ENCODE measurements at regions of chr11 and their contacts with region 1.

Region 1: DNA sequence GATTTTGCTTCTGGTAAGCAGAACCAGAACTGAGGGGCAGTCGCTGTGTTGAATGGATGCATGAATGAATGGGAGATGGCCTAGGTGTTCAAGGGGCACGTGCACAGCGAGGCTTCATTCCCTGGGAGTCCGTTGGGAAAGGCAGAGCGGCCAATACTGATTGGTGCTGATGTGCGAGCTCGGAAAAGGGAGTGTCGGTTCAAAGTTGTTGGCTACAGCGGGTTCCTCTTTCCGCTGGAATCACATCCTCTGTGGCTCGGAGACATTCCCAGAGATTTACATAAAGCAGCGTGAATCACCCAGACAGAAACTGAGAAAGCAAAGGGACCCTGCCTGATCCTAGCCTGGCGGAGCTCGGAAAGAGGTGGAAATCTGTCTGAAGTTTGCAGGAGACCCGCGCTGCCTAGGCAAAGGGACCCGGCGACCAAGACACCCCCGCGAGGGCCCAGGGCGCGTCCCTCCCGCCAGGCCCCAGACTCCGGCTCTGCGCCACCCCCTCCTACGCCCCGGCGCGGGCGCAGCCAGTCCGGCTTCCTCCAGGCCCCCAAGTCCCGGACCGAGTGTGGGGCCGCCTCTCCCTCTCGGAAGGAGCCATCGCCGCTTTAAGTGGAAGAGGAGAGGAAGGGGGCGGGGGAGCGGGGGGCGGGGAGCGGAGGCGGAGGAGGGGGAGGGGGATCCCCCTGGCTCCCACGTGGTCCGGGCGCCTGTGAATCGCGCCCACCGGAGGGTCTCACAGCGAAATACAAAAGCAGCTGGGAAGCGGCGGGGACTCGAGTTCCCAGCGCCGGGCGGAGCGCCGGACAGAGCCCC is at the start of gene FJX1:
- DNase-seq: peak; percentile 83
- H3K4me3 ChIP-seq: peak within 1 kb of the TSS; percentile 54 to 75 (median 62)
- H3K27ac ChIP-seq: peak within 1 kb of the TSS; percentile 92
- H3K4me1 ChIP-seq: peaks cover 32% of the 10 kb centered on the region
- H3K27me3 ChIP-seq: peaks cover 3 to 18% of the 10 kb centered on the region in 2 experiments
- CTCF ChIP-seq: no peak
- POLR2A ChIP-seq: peak; percentile 32
- total RNA-seq, gene FJX1: 23.7 and 26.6 TPM in 2 replicates

Region 2: DNA sequence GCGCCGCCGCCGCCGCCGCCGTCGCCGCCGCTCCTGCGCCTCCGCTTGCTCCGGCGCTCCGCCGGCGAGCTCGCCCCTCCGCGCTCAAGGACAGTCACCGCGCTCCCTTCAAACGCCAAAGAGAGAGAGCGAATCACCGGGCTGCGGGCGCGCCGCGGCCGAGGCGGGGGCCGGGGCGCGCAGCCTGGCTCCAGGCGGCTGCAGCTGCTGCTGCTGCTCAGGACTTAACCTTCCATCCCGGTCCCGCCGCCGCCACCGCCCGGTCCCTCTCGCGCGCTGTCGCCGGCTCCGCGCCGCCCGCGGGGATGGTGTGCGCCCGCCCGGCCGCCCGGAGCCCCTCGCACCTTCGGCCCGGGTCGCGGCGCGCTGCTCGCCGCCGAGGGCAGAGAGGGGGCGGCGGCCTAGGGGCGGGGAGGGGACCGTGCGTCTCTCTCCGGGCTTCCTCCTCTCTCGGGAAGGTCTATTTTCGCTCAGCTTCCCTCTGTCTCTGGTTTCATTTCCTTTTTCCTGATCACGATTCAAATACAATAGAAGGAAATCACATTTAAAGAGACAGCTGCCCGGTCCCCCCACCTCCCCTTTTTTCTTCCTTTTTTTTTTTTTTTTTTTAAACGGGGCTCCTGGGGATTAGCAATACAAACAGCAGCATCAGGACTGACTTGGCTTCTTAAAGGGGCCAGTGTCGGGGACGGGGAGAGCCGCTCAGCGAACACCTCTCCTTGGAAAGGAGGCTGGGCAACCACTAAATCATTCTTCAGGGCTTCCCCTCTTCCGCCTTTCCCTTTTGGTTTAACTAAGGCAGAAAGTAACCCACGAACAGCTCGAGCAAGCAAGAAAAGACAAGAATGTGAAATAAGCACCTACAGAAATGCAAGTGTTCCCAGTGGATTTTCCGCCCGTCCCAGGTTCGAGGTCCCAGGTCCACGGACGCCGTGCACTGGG is 1748.1 kb before region 1 on chr11:
- CTCF ChIA-PET with region 1: no interaction called
- POLR2A ChIA-PET with region 1: no interaction called
- dilution Hi-C with region 1: no loop called
- intact Hi-C with region 1: loop called (anchors 5 kb)
- DNase-seq: peak; percentile 92
- H3K4me3 ChIP-seq: peak overlapping the region; percentile 56 to 87 (median 76)
- H3K27ac ChIP-seq: peak overlapping the region; percentile 62
- H3K4me1 ChIP-seq: peaks cover 23% of the 10 kb centered on the region
- H3K27me3 ChIP-seq: peaks cover 0 to 2% of the 10 kb centered on the region in 2 experiments
- CTCF ChIP-seq: no peak
- POLR2A ChIP-seq: no peak

Region 3: GRCh38 chr11:35387111-35387982 is 230.5 kb before region 1 on chr11:
- CTCF ChIA-PET with region 1: no interaction called
- POLR2A ChIA-PET with region 1: no interaction called
- dilution Hi-C with region 1: no loop called
- intact Hi-C with region 1: no loop called
- DNase-seq: no peak
- H3K4me3 ChIP-seq: no peak overlapping the region
- H3K27ac ChIP-seq: no peak overlapping the region
- H3K4me1 ChIP-seq: no peaks in the 10 kb centered on the region
- H3K27me3 ChIP-seq: peaks cover 2 to 11% of the 10 kb centered on the region in 2 experiments
- CTCF ChIP-seq: no peak
- POLR2A ChIP-seq: no peak

Region 4: GRCh38 chr11:35714882-35715627 is 97.2 kb after region 1 on chr11:
- CTCF ChIA-PET with region 1: interaction called, 4 read pairs
- POLR2A ChIA-PET with region 1: no interaction called
- dilution Hi-C with region 1: no loop called
- intact Hi-C with region 1: loop called (anchors 5 kb)
- DNase-seq: no peak
- H3K4me3 ChIP-seq: no peak overlapping the region
- H3K27ac ChIP-seq: no peak overlapping the region
- H3K4me1 ChIP-seq: no peaks in the 10 kb centered on the region
- H3K27me3 ChIP-seq: no peaks in the 10 kb centered on the region
- CTCF ChIP-seq: no peak
- POLR2A ChIP-seq: no peak

Region 5: DNA sequence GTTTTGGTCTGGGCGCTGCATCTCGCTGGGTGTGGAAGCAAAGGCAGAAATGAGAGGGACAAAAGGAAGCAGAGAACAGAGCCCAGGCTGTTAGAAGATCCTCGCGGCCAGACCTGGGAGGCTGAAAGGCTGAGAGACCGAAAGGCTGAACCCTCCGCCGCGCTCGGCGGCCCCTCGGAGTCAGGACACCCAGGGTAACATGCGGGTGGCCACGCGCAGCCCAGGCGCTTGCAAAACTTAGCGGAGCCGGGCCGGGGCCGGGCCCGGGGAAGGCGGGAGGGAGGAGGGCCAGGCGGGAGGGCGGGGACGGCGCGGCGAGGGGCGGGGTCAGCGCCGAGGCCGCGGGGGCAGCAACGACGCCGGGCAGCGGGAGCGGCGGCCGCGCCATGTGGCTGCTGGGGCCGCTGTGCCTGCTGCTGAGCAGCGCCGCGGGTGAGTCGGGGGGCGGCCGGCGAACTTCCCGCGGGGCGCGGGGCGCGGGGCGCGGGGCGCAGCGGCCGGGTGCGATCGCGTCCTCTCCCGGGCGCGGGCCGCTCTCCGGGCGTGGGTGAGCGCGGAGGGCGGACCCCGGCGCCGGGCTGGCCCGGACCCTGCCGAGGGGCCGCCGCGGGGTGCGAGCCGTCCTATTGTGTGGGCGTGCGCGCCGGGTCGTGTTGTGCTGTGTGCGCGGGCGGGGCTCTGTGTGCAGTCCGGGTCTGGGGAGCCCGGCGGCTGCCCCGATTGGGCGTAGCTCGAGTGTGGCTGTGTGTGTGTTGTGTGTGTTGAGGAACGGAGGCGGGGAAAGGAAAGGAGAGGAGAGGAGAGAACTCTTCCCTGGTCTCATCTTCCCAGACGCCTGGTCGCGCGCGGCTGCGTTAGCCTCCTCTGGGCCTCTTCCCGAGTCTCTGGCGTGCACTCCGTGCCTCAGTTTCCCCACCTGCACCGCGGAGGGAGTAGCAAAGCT is 326.1 kb after region 1 on chr11 and contains the start of gene LDLRAD3:
- CTCF ChIA-PET with region 1: no interaction called
- POLR2A ChIA-PET with region 1: no interaction called
- dilution Hi-C with region 1: no loop called
- intact Hi-C with region 1: loop called (anchors 2 kb)
- DNase-seq: peak; percentile 72
- H3K4me3 ChIP-seq: peak within 1 kb of the TSS; percentile 62 to 82 (median 77)
- H3K27ac ChIP-seq: peak within 1 kb of the TSS; percentile 45
- H3K4me1 ChIP-seq: peaks cover 18% of the 10 kb centered on the region
- H3K27me3 ChIP-seq: no peaks in the 10 kb centered on the region
- CTCF ChIP-seq: no peak
- POLR2A ChIP-seq: peak; percentile 54
- total RNA-seq, gene LDLRAD3: 19.9 and 25.1 TPM in 2 replicates

Region 6: GRCh38 chr11:36056160-36056751 is 438.4 kb after region 1 on chr11:
- CTCF ChIA-PET with region 1: interaction called, 7 read pairs
- POLR2A ChIA-PET with region 1: no interaction called
- dilution Hi-C with region 1: no loop called
- intact Hi-C with region 1: loop called (anchors 1 kb)
- DNase-seq: peak; percentile 58
- H3K4me3 ChIP-seq: no peak overlapping the region
- H3K27ac ChIP-seq: no peak overlapping the region
- H3K4me1 ChIP-seq: peaks cover 18% of the 10 kb centered on the region
- H3K27me3 ChIP-seq: no peaks in the 10 kb centered on the region
- CTCF ChIP-seq: peak; percentile 69 to 73
- POLR2A ChIP-seq: no peak

Region 7: GRCh38 chr11:36265793-36266628 is 648.1 kb after region 1 on chr11:
- CTCF ChIA-PET with region 1: interaction called, 15 read pairs
- POLR2A ChIA-PET with region 1: no interaction called
- dilution Hi-C with region 1: loop called (anchors 25 kb)
- intact Hi-C with region 1: loop called (anchors 1 kb)
- DNase-seq: peak; percentile 40
- H3K4me3 ChIP-seq: no peak overlapping the region
- H3K27ac ChIP-seq: no peak overlapping the region
- H3K4me1 ChIP-seq: no peaks in the 10 kb centered on the region
- H3K27me3 ChIP-seq: peaks cover 0 to 5% of the 10 kb centered on the region in 2 experiments
- CTCF ChIP-seq: peak; percentile 86 to 89
- POLR2A ChIP-seq: no peak